CD4-positive, alpha-beta memory T cell (primary cell): ENCODE measurements at regions of chr10 and their contacts with region 1.

Region 1: DNA sequence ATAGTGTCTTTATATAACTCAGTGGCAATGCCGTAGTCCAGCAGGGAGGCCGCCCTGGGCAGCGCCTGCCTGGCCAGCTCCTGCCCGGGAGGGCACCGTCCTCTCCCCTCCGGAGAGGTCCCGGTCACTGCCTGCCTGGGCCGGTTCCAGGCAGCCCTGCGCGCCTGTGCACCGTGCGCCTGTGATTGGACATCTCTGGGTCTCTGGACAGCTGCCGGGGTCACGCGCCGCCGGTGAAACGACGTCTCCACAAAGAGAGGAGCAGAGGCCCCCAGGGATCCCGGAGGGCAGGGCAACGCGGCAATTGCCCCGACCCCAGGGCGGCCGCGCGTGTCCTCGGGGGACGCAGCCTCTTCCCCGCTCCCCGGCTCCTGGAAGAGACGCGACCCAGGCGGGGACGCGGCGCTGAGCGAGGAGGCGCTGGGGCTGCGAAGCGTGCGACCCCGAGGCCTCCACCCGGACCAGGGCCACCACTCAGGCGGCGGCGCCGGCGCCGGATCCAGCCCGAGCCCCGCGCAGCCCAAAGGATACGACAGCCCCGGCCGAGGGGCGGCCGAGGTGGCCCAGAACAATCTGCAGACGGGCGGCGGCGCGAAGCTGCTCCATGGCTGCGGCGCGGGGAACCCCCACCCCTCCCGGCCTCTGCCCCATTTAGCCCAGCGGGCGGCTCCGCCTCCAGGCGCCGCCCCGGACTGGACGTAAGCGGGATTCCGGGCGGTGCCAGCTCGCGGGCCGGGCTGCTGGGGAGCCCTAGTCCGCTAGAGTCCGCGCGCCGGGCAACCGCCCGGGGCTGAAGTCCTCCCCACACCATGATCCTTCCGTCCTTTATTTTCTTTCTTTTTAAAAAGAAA is at the start of gene PHYH:
- DNase-seq: peak; percentile 80 to 86 (median 82)
- H3K4me3 ChIP-seq: peak within 1 kb of the TSS; percentile 36 to 57
- H3K4me3 Mint-ChIP-seq: peak within 1 kb of the TSS; percentile 85 to 90 (median 86)
- H3K27ac ChIP-seq: peak within 1 kb of the TSS; percentile 88
- H3K27ac Mint-ChIP-seq: peak within 1 kb of the TSS; percentile 88 to 100 (median 96)
- H3K4me1 ChIP-seq: peaks cover 28% of the 10 kb centered on the region
- H3K4me1 Mint-ChIP-seq: peaks cover 8 to 30% (median 20%) of the 10 kb centered on the region in 4 donors
- H3K27me3 ChIP-seq: no peaks in the 10 kb centered on the region
- H3K27me3 Mint-ChIP-seq: no peaks in the 10 kb centered on the region
- total RNA-seq, gene PHYH: 8.7 to 10.2 TPM

Region 2: DNA sequence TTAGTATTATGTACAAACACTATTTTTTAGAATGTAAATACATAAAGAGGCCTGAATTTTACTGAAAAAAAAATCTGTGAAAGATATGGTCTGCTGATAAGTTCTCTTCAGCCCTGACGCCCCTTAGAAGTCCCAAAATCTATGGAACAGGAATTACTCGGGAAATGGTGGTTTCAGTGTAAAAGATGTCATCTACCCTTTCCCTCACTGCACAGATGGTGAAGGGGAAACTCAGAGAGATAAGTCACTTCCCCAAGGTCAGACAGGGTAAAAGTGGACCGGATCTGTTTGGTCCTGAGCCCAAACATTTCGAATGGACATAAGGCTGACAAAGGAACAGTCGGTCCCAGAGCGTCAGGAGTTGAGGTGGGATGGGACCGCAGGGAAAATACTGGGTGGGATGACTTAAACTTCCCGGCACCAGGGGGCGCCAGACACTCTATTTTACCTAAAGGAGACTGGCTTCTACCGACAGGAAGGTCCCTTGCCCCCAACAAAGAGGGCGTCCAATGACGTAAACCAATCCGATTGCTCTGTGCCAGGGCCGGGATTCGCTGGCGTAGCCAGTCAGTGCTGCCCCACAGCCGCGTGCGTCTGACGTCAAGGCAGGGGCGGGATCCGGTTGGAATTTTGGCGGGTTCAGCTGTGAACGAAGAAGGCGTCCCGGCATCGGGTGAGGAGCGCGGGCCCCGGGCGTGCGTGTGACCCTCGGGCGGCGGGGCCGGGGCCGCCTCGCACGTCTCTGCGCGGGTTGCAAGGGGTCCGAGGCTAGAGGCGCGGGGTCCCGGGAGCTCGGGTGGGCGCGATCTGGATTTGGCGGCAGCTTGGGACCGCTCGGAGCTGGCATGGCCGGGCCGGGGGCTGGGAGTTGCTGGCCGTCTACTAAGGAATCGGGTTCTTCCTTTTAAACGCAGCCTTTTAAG is 138.5 kb before region 1 on chr10 and contains the start of gene MCM10:
- CTCF ChIA-PET with region 1: interaction called, 35 read pairs
- POLR2A ChIA-PET with region 1: interaction called, 49 read pairs
- intact Hi-C with region 1: loop called (anchors 1 kb)
- DNase-seq: peak; percentile 95 to 99 (median 97)
- H3K4me3 ChIP-seq: peak within 1 kb of the TSS; percentile 50 to 58
- H3K4me3 Mint-ChIP-seq: peak within 1 kb of the TSS; percentile 82 to 94 (median 88)
- H3K27ac ChIP-seq: peak within 1 kb of the TSS; percentile 33
- H3K27ac Mint-ChIP-seq: peak within 1 kb of the TSS; percentile 82 to 94 (median 88)
- H3K4me1 ChIP-seq: peaks cover 15% of the 10 kb centered on the region
- H3K4me1 Mint-ChIP-seq: peaks cover 15 to 36% (median 23%) of the 10 kb centered on the region in 4 donors
- H3K27me3 ChIP-seq: no peaks in the 10 kb centered on the region
- H3K27me3 Mint-ChIP-seq: no peaks in the 10 kb centered on the region
- total RNA-seq, gene MCM10: 0.17 TPM in 1 of 2 experiments, not detected in the other

Region 3: GRCh38 chr10:13271552-13272163 is 28.0 kb before region 1 on chr10:
- CTCF ChIA-PET with region 1: interaction called, 21 read pairs
- POLR2A ChIA-PET with region 1: interaction called, 6 read pairs
- intact Hi-C with region 1: loop called (anchors 1 kb)
- DNase-seq: peak; percentile 41 to 54 (median 49)
- H3K4me3 ChIP-seq: no peak overlapping the region
- H3K4me3 Mint-ChIP-seq: peak overlapping the region in 3 of 8 donors; percentile 17 to 18 (median 17)
- H3K27ac ChIP-seq: no peak overlapping the region
- H3K27ac Mint-ChIP-seq: peak overlapping the region in 4 of 7 donors; percentile 37 to 81 (median 72)
- H3K4me1 ChIP-seq: peaks cover 8% of the 10 kb centered on the region
- H3K4me1 Mint-ChIP-seq: peaks cover 0 to 6% (median 4%) of the 10 kb centered on the region in 4 donors
- H3K27me3 ChIP-seq: no peaks in the 10 kb centered on the region
- H3K27me3 Mint-ChIP-seq: peaks cover 0 to 2% of the 10 kb centered on the region in 2 donors

Region 4: GRCh38 chr10:13348216-13349017 is 48.8 kb after region 1 on chr10 and contains the start of gene SEPHS1:
- CTCF ChIA-PET with region 1: interaction called, 44 read pairs
- POLR2A ChIA-PET with region 1: interaction called, 110 read pairs
- intact Hi-C with region 1: loop called (anchors 1 kb)
- DNase-seq: peak; percentile 79 to 87 (median 80)
- H3K4me3 ChIP-seq: peak within 1 kb of the TSS; percentile 89 to 93
- H3K4me3 Mint-ChIP-seq: peak within 1 kb of the TSS; percentile 94 to 97 (median 96)
- H3K27ac ChIP-seq: peak within 1 kb of the TSS; percentile 75
- H3K27ac Mint-ChIP-seq: peak within 1 kb of the TSS; percentile 88 to 97 (median 96)
- H3K4me1 ChIP-seq: peaks cover 50% of the 10 kb centered on the region
- H3K4me1 Mint-ChIP-seq: peaks cover 33 to 76% (median 51%) of the 10 kb centered on the region in 4 donors
- H3K27me3 ChIP-seq: no peaks in the 10 kb centered on the region
- H3K27me3 Mint-ChIP-seq: no peaks in the 10 kb centered on the region
- total RNA-seq, gene SEPHS1: 27.2 to 30.6 TPM